Naive thymus-derived CD8-positive, alpha-beta T cell (primary cell): ENCODE measurements at regions of chrX and their contacts with region 1.

Region 1: GRCh38 chrX:44253575-44253942 is 89.9 kb downstream of the EFHC2 start:
- DNase-seq: no peak
- ATAC-seq: no peak
- H3K4me3 Mint-ChIP-seq: peak overlapping the region in 9 of 10 donors; percentile 50 to 83 (median 72)
- H3K27ac Mint-ChIP-seq: peak overlapping the region; percentile 87 to 96 (median 94)
- H3K4me1 Mint-ChIP-seq: peaks cover 6 to 53% (median 32%) of the 10 kb centered on the region in 4 donors
- H3K27me3 Mint-ChIP-seq: no peaks in the 10 kb centered on the region

Region 2: GRCh38 chrX:44265559-44265958 is 12.0 kb after region 1 on chrX:
- POLR2A ChIA-PET with region 1: interaction called, 22 read pairs
- DNase-seq: peak in 2 of 10 donors; percentile 44 to 45
- ATAC-seq: peak; percentile 62 to 75
- H3K4me3 Mint-ChIP-seq: peak overlapping the region; percentile 50 to 83 (median 66)
- H3K27ac Mint-ChIP-seq: peak overlapping the region in 9 of 10 donors; percentile 26 to 82 (median 71)
- H3K4me1 Mint-ChIP-seq: peaks cover 18 to 50% (median 44%) of the 10 kb centered on the region in 4 donors
- H3K27me3 Mint-ChIP-seq: no peaks in the 10 kb centered on the region

Region 3: GRCh38 chrX:44291468-44292113 is 38.0 kb after region 1 on chrX:
- POLR2A ChIA-PET with region 1: no interaction called
- DNase-seq: no peak
- ATAC-seq: no peak
- H3K4me3 Mint-ChIP-seq: no peak overlapping the region
- H3K27ac Mint-ChIP-seq: no peak overlapping the region
- H3K4me1 Mint-ChIP-seq: peaks cover 0 to 6% (median 3%) of the 10 kb centered on the region in 4 donors
- H3K27me3 Mint-ChIP-seq: no peaks in the 10 kb centered on the region